ENCODE measurements at regions of chr6 and their contacts with region 1.

Region 1: DNA sequence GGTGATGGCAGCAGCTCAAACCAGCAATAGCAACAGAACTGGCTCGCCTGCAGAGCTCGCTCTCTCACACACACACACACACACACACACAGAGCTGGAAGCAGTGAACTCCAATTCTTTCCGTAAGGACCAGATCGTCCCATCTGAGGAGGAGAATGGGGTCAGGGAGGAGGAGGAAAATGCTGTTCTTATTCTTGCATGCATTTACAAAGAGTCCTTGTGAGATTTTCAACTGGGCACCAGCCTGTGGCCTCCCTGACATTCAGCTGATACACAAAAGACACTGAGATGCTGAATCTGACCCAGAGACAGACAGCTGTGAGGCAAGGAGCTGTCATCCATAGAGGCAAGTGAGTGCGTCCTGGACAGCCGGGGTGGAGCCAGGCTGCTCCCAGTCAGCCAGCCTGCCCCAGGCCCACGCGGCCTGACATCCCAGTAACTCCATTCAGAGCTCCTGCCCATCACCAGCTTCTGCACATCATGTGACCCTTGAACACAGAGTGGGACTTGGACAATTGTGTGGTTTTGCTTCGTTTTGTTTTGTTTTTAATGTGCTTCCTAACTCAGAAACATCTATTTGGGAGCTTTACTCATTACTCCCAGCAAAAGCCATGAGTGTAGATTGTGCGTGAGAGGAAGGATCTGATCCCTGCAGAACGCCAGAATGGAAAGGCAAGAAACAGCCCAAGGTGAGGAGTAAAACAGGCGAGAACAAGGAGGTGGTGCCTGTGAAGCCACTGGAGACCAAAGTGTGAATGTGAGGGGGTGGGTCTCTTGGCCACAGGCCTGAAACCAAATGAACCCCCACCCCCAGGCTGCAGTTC is 2.1 kb downstream of the SERPINB9 start:
- DNase-seq: no peak
- CTCF ChIP-seq: no peak

Region 2: DNA sequence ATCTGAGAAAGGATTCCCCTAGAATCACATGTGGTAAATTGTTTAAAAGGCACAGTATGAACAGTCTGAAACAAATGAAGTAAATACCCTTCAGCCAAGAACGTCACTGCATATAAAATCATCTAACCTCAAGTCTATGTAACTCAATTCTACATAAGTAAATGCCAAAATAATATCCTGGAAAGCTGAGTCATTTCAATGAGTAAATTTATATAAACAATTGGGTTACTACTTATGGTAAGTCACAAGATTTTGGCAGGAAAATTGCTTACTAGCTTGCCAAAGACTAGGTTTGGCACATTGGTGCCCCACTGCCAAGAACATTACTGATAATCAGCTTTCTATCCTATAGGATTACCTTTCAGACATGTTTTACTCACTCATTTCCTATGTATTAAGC is 664.0 kb before region 1 on chr6:
- CTCF ChIA-PET with region 1: no interaction called
- POLR2A ChIA-PET with region 1: no interaction called
- DNase-seq: no peak
- CTCF ChIP-seq: no peak

Region 3: DNA sequence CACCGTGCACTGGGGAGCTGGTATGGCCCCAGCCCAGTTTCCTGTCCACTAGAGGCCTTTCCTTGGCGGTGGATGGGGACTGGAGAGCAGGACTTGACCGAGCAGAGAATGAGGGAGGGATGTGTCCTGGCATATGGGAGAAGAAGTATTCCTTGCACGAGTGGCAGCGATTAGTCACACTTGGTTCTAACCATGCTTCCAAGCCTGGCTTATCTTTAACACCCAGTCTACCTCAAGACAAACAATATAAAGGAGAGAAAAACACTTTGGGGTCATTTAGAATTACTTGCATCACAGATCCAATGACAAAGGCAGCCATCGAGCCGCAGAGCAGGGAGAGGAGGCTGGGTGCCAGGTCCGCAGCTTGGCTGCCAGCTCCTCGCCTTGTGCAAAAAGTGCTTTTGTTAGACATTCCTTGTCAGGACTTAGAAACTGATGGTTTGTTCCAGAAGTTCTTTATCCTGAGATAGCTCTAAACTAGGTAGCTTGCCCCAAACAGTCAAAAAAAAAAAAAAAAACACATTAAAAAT is 440.8 kb before region 1 on chr6:
- CTCF ChIA-PET with region 1: no interaction called
- POLR2A ChIA-PET with region 1: no interaction called
- DNase-seq: no peak
- CTCF ChIP-seq: no peak

Region 4: GRCh38 chr6:2706558-2706957 is 194.5 kb before region 1 on chr6:
- CTCF ChIA-PET with region 1: no interaction called
- POLR2A ChIA-PET with region 1: no interaction called
- DNase-seq: no peak
- CTCF ChIP-seq: no peak

Region 5: DNA sequence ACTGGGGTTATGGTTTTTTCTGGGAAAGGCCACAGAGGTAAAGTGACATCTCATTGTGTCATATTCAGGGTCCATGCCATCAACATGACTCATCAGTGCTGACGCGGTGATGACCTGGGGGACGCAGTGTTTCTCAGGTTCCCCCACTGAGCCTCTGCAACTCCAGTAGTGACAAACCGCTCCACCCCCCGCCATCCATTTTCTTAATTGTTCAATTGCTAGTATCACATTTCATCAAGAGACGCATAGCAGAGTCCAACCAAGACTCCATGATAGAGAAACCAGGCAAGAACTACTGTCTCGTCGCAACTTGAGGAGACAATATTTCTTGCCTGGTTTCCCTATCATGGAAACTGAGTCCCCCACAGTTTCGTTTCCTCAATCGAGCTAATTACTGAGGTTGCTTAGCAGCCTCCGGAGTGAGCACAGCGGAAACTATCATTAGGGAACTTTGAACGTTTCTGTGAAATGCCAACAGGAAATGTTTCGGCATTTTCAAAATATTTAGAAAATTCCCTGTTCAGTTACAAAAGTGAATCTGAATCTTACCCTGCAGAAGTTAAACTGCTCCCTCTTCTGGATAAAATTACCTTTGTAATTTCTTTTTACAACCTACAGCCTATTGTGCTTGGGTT is 47.2 kb before region 1 on chr6:
- CTCF ChIA-PET with region 1: interaction called, 6 read pairs
- POLR2A ChIA-PET with region 1: interaction called, 14 read pairs
- DNase-seq: peak; percentile 53
- CTCF ChIP-seq: peak; percentile 20

Region 6: GRCh38 chr6:3356056-3356761 is 455.2 kb after region 1 on chr6:
- CTCF ChIA-PET with region 1: no interaction called
- POLR2A ChIA-PET with region 1: no interaction called
- DNase-seq: peak; percentile 86
- CTCF ChIP-seq: no peak

Measured in GM10248 (cell line).